HAP-1 (cell line): ENCODE measurements at regions of chr5 and their contacts with region 1.

Region 1: DNA sequence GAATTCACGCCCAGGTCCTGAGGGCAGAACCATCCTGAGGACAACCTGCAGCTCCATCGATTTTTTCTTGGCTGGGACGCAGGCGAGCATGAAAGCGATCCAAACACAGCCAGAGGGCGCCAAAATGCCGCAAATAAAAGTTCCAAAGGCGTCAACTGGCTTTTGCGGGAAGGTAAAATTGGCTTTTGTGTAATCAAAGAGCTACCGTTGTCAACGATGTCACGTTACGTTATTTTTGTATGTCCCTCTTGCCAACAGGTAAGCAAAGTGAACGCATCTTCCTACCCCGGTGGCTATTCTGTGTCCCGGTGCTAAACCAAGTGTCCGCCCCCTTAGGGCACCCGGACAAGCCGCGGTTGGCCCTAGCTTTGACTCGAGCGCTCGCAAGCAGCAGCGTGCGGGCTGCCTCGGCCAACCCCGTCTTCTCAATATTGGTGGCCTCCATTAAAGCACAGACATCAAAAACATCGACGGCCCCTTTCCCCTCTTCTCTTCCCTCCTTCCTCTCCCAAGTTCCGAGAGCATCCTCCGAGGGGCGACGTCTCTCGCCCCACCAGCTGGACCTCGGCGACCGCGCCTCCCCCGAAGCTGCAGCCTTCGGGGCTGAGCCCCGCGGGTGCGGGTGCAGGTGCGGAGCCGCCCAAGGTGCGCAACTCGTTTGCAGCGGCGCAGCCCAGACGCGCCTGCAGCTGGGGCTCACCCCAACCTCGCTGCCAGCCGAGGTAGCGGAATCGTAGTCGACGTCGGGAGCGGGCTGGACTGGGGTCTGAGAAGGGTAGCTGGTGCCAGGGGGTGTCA is 1.1 kb upstream of the BASP1 start:
- DNase-seq: peak; percentile 83 to 89
- H3K4me3 ChIP-seq: peak overlapping the region; percentile 36
- H3K4me1 ChIP-seq: peaks cover 44% of the 10 kb centered on the region
- H3K27me3 ChIP-seq: no peaks in the 10 kb centered on the region

Region 2: GRCh38 chr5:16160706-16161105 is 1055.7 kb before region 1 on chr5:
- in situ Hi-C with region 1: loop called (anchors 25 kb)
- DNase-seq: peak; percentile 45 to 53
- H3K4me3 ChIP-seq: no peak overlapping the region
- H3K4me1 ChIP-seq: no peaks in the 10 kb centered on the region
- H3K27me3 ChIP-seq: no peaks in the 10 kb centered on the region

Region 3: DNA sequence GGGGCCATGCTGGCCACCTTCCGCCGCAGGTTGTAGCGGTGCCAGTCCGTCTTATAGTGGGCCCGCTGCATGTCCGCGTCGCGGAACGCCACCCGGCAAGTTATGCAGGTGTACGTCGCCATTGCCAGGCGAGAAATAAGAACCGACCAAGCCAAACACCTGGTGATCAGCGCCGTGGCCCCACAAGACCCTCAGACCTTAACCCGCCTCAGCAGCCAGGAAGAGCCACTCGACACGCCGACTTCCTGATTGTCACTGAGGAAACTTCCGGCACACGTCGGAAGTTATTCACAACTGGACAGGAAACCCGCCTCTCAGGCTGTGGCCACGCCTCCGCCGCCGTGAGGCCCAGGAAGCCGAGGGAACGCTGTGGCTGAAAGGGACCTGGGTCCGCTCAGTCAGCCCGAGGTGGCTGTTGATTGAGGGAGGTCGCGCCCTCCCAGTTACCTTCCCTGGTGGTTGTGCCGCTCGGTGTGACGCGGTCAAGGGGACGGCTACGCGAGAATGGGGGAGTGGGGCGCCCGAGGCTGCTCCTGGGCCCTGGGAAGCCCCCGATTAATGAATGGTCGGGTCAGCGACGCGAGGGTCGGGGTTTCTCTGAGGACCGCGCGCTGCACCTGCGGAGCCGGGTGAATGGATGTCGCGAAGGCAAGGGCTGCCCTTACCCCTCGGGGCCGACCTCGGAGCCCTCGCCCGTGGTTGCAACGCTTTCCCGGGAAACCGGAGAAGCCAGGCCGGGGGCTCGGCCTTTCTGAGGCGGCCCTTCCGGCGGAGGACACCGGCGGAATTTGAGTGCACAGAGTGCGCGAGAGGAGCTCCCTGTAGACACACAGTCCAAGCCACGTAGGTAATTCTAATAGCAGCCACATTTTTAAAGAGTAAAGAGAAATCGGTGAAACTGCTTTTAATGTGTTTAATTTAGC is 750.6 kb before region 1 on chr5 and contains the start of gene ZNF622:
- in situ Hi-C with region 1: loop called (anchors 25 kb)
- DNase-seq: peak; percentile 88 to 93
- H3K4me3 ChIP-seq: peak within 1 kb of the TSS; percentile 96
- H3K4me1 ChIP-seq: peaks cover 9% of the 10 kb centered on the region
- H3K27me3 ChIP-seq: no peaks in the 10 kb centered on the region

Region 4: GRCh38 chr5:16642862-16643261 is 573.5 kb before region 1 on chr5:
- in situ Hi-C with region 1: no loop called
- DNase-seq: no peak
- H3K4me3 ChIP-seq: no peak overlapping the region
- H3K4me1 ChIP-seq: no peaks in the 10 kb centered on the region
- H3K27me3 ChIP-seq: no peaks in the 10 kb centered on the region

Region 5: GRCh38 chr5:18305297-18305924 is 1089.0 kb after region 1 on chr5:
- in situ Hi-C with region 1: loop called (anchors 5 kb)
- DNase-seq: peak; percentile 30 to 33
- H3K4me3 ChIP-seq: no peak overlapping the region
- H3K4me1 ChIP-seq: no peaks in the 10 kb centered on the region
- H3K27me3 ChIP-seq: no peaks in the 10 kb centered on the region